ENCODE measurements at regions of chr12 and their contacts with region 1.

Region 1: DNA sequence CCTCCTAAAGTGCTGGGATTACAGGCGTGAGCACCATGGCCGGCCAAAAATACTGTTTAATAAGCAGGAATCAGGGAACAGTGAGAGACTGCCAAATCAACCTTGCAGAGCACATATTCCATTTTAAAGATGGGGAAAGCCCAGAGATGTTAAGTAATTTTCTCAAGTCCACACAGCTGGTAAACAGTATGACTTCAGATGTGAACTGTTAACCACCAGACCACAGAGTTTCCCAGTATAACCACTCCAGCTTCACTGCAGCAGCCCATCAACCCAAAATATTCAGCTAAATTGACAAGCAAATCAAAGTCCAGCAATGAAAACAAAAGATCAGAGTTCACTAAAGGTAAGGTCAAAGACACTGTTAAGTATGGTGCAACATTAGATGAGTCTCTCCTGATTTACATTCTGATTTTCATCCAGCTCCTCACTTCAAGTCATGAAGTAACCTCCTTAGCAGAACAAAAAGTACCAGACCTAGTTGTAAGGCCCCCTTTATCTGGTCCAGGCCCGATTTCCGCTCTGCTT is 82.1 kb downstream of the TRAFD1 start:
- DNase-seq: no peak
- CTCF ChIP-seq: no peak

Region 2: DNA sequence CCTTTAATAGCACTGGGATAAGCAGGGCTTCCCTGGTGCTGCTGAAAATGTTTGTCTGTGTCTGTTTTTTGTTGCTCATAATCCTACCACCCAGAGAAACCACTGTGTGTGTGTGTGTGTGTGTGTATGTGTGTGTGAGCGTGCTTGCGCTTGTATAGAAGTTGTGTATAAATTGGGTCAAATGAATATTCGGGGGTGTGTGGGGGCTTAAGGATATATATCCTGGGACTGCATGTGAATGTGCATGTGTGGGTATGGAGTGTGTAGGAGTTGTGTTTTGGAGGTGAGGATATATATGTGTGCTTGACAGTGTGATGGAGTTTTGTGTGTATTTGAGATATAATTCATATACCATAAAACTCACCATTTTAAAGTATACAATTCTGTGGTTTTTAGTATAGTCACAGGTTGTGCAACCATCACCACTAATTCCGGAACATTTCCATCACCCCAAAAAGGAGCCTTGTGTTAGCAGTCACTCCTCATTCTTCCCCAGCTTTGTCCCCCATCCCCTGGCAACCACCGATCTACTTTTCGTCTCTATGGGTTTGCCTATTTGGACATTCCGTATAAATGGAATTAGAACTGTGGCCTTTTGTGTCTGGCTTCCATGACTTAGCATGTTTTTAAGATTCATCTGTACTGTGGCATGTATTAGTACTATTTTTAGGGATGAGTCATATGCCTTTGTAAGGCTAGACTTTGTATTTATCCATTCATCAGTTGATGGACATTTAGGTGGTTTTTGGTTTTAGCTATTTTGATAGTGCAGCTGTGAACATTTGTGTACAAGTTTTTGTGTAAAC is 1567.9 kb before region 1 on chr12:
- in situ Hi-C with region 1: no loop called
- DNase-seq: peak; percentile 34
- CTCF ChIP-seq: no peak

Region 3: GRCh38 chr12:112382232-112382796 is 174.9 kb after region 1 on chr12 and contains the start of gene HECTD4:
- in situ Hi-C with region 1: loop called (anchors 10 kb)
- DNase-seq: peak; percentile 98
- CTCF ChIP-seq: no peak

Region 4: DNA sequence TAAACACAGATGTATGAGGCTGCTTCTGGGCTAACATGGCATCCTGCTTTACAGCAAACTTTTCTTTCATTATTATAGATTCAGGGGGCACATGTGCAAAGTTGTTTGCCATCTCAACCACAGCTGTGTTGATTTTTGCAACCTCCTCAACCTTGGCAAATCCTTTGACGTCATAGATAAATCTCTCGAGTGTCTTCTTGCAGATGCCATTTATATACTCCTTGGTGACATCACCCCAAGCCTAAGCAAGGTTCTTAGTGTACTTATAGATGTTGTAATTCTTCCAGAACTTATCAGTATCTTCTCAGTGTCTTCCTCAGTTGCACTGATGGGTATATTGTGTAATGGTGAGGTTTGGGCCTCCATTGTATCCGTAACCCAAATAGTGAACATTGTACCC is 448.7 kb after region 1 on chr12:
- in situ Hi-C with region 1: no loop called
- DNase-seq: no peak
- CTCF ChIP-seq: no peak

Region 5: GRCh38 chr12:112988224-112988623 is 780.8 kb after region 1 on chr12:
- in situ Hi-C with region 1: no loop called
- DNase-seq: no peak
- CTCF ChIP-seq: no peak

Measured in GM13977 (cell line).